ENCODE measurements at regions of chr12 and their contacts with region 1.

Region 1: GRCh38 chr12:47715393-47715876 is 9.6 kb upstream of the RPAP3 start:
- DNase-seq: peak; percentile 94
- H3K4me3 ChIP-seq: peak overlapping the region; percentile 17 to 31 (median 28)
- H3K27ac ChIP-seq: peak overlapping the region; percentile 80 to 86 (median 82)
- H3K4me1 ChIP-seq: peaks cover 46 to 53% (median 50%) of the 10 kb centered on the region in 4 donors
- H3K27me3 ChIP-seq: no peaks in the 10 kb centered on the region
- CTCF ChIP-seq: peak; percentile 71 to 83 (median 74)
- EP300 ChIP-seq: no peak
- POLR2A ChIP-seq: no peak

Region 2: DNA sequence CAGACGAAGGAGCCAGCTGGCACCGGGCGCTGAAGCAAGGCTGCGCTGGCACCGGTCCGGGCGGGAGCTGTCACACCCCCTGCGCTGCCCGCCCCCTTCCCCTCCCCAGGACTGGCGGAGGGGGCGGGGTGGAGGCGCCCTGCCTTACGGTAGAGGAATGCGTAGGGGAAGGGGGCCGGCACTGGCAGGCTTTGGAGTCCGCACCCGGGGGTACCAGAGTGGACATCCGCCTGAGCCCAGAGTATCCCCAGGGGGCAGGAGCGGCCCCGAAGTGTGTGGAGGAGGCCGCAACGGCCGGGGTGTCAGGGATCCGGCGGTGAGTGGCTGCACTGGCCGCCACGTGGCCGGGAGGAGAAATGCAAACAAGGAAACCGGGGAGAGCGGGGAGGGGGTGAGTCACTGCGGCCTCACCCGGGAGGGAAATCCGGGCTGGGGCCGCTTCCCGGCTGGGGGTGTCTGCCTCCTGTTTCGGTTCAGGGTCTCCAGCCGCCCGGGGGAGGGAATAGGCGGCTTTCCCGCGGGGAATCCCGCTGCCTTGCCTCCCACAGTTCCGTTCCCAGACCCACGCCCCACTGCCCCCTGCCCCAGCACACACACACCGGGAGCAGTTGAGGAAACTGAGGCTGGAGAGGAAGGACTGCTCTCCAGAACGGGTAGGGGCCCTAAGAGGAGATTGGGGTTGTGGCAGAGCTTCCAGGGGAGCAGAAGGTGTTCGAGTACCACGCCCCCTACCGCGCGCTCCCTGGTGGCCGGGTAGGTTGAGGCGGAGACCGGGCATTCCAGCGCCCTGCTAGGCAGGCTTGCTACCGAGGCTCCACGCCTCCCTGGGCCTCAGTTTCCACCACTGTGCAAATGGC is 43.6 kb after region 1 on chr12 and contains the start of gene RAPGEF3:
- intact Hi-C with region 1: loop called (anchors 5 kb)
- DNase-seq: peak; percentile 96
- H3K4me3 ChIP-seq: peak within 1 kb of the TSS; percentile 72 to 85 (median 74)
- H3K27ac ChIP-seq: peak within 1 kb of the TSS; percentile 68 to 80 (median 80)
- H3K4me1 ChIP-seq: peaks cover 33 to 44% (median 41%) of the 10 kb centered on the region in 4 donors
- H3K27me3 ChIP-seq: no peaks in the 10 kb centered on the region
- CTCF ChIP-seq: peak; percentile 32 to 52 (median 32)
- EP300 ChIP-seq: no peak
- POLR2A ChIP-seq: no peak
- total RNA-seq, gene RAPGEF3: 18.3 to 48.2 (median 32.5) TPM

Region 3: GRCh38 chr12:47779301-47779942 is 64.0 kb after region 1 on chr12:
- intact Hi-C with region 1: loop called (anchors 5 kb)
- DNase-seq: peak; percentile 99
- H3K4me3 ChIP-seq: no peak overlapping the region
- H3K27ac ChIP-seq: peak overlapping the region; percentile 51 to 80 (median 61)
- H3K4me1 ChIP-seq: peaks cover 53 to 80% (median 73%) of the 10 kb centered on the region in 4 donors
- H3K27me3 ChIP-seq: no peaks in the 10 kb centered on the region
- CTCF ChIP-seq: peak; percentile 94 to 96 (median 96)
- EP300 ChIP-seq: no peak
- POLR2A ChIP-seq: no peak

Region 4: GRCh38 chr12:47837190-47838171 is 122.0 kb after region 1 on chr12:
- intact Hi-C with region 1: loop called (anchors 2 kb)
- DNase-seq: no peak
- H3K4me3 ChIP-seq: no peak overlapping the region
- H3K27ac ChIP-seq: peak overlapping the region in 1 of 4 donors; percentile 55
- H3K4me1 ChIP-seq: peaks cover 12 to 28% (median 21%) of the 10 kb centered on the region in 4 donors
- H3K27me3 ChIP-seq: no peaks in the 10 kb centered on the region
- CTCF ChIP-seq: peak; percentile 91 to 97 (median 96)
- EP300 ChIP-seq: no peak
- POLR2A ChIP-seq: no peak

Region 5: GRCh38 chr12:47850153-47851084 is 135.0 kb after region 1 on chr12:
- intact Hi-C with region 1: no loop called
- DNase-seq: no peak
- H3K4me3 ChIP-seq: no peak overlapping the region
- H3K27ac ChIP-seq: no peak overlapping the region
- H3K4me1 ChIP-seq: no peaks in the 10 kb centered on the region
- H3K27me3 ChIP-seq: no peaks in the 10 kb centered on the region
- CTCF ChIP-seq: no peak
- EP300 ChIP-seq: no peak
- POLR2A ChIP-seq: no peak

Region 6: DNA sequence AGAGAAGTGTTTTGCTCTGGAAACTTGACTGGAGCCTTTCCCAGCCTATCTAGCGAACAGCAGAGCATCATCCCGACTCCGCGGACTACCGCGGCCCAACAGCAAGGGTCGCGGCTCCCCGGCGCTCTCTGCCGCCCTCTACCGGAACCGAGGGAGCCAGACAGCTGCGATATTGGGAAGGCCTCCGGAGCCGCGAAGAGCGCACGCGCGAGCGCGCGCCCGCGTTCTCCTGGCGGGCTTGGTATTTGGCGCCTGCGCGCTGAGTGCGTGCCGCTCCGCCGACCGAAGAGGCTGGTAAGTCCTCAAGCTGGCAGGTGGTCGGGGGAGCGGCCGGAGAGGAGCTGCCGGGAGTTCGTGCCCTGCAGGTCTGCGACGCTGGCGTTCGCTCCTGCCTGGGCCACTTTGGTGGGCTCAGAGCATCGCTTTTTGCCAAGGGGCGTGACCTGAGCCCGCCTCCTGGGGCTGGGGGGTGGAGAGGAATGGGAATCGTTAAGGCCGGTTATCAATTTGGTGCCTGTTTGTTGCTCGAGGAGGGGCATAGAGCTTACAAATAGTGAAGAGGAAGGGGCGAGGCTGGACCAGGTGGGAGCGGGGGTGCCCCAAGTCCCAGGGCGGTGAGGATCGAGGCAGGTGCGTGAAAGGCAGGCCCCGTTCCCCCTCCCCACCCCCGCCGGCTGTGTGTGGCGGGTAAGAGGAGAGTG is 248.1 kb after region 1 on chr12 and contains the start of gene TMEM106C:
- intact Hi-C with region 1: loop called (anchors 10 kb)
- DNase-seq: peak; percentile 96
- H3K4me3 ChIP-seq: peak within 1 kb of the TSS; percentile 72 to 82 (median 81)
- H3K27ac ChIP-seq: peak within 1 kb of the TSS; percentile 66 to 76 (median 72)
- H3K4me1 ChIP-seq: peaks cover 19 to 26% (median 21%) of the 10 kb centered on the region in 4 donors
- H3K27me3 ChIP-seq: no peaks in the 10 kb centered on the region
- CTCF ChIP-seq: peak in 2 of 3 experiments; percentile 95 to 97
- EP300 ChIP-seq: no peak
- POLR2A ChIP-seq: no peak
- total RNA-seq, gene TMEM106C: 68.6 to 98.8 (median 72.0) TPM